ENCODE measurements at regions of chr6 and their contacts with region 1.

Region 1: DNA sequence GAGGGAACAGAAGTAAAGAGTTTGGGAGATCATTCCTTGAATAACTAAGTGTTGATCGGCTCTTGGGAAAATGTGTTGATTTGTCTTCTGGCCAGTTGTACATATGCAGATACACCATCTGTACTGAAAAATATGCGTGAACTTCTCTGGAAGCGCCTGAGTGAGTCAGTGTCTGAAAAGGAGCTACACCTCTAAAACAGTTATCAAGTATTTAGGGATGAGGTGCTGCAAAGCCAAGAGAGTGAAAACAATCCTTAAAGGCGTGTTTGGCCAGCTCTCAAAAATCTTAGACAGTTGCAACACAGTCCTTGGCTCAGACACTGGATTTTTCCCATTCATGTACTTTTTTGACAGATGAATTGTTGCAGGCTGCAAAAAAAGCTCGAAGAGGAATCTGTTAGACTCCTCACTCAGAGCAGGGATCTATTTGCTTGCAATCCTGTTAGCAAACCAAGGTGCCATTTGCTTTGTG is 61.3 kb downstream of the BMP6 start:
- DNase-seq: peak; percentile 14
- H3K4me3 ChIP-seq: no peak overlapping the region
- H3K27ac ChIP-seq: peak overlapping the region; percentile 61 to 73 (median 64)
- H3K4me1 ChIP-seq: peaks cover 0 to 15% (median 0%) of the 10 kb centered on the region in 4 donors
- H3K27me3 ChIP-seq: no peaks in the 10 kb centered on the region
- CTCF ChIP-seq: no peak
- EP300 ChIP-seq: no peak
- POLR2A ChIP-seq: no peak

Region 2: DNA sequence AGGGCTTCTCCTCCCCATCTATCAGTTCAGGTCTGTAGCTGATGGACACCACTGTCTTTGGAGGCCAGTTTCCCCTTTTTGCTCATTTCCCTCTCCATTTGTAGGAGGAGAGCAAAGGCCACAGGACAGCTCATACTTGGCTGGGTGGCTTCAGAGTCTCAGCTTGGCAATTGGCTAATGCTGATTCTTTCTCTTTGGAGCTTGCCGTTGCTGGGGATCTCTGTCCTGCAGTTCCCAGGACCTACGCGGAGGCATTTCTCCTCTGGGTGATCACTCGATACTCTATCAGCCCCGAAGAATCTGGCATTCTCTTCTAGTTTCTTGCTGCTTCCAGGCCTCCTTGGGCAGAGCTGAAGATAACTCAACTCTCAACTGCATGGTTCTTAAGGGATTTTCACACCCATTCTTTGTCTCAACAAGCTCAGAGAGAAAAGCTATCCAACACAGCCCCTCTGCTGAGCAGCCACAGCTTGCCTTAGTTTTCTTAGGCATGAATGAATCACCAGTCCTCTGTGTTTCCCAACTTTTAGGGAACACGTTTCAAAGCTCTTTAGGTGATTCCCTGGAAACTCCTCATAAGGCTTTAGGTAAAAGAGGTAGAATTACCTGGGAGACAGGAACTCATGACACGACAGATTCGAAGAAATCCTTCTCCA is 455.0 kb before region 1 on chr6:
- in situ Hi-C with region 1: no loop called
- intact Hi-C with region 1: no loop called
- DNase-seq: no peak
- H3K4me3 ChIP-seq: no peak overlapping the region
- H3K27ac ChIP-seq: no peak overlapping the region
- H3K4me1 ChIP-seq: no peaks in the 10 kb centered on the region
- H3K27me3 ChIP-seq: no peaks in the 10 kb centered on the region
- CTCF ChIP-seq: no peak
- EP300 ChIP-seq: no peak
- POLR2A ChIP-seq: no peak

Region 3: DNA sequence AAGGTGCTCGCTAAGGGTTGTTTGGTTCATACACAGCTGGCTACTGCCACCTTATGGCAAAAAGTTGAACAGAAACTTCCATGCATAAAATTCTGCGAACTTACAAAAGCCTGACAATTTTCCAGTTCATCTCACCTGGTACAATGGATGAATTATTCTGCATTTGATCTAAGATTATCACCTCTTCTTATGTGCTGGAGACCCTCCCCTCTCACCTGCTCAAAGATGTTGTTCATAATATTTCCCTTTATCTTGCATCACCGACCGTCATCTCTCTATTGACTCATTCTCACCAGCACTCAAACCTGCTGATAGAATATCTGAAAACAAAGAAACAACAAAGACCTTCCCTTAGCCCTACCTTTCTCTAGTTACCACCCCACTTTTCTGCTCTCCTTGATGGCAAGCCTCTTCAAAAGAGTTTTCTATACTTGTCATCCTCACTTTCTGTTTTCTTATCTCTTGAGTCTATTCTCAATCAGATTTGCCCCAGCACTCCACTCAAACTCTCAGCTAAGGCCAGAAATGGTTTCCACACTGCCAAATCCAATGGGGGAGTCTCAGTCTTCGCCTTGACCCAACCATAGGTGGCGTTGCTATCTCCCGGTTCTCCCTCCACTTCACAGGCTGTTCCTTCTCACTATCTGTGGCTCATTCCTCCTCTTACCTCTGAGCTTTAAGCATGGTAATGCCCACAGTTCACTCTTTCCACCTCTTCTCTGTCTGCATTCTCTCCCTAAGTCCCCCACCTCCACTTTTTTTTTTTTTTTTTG is 171.4 kb before region 1 on chr6:
- in situ Hi-C with region 1: no loop called
- intact Hi-C with region 1: no loop called
- DNase-seq: peak; percentile 33
- H3K4me3 ChIP-seq: peak overlapping the region in 1 of 4 donors; percentile 14
- H3K27ac ChIP-seq: no peak overlapping the region
- H3K4me1 ChIP-seq: peaks cover 0 to 13% (median 4%) of the 10 kb centered on the region in 4 donors
- H3K27me3 ChIP-seq: no peaks in the 10 kb centered on the region
- CTCF ChIP-seq: peak; percentile 65 to 82 (median 67)
- EP300 ChIP-seq: no peak
- POLR2A ChIP-seq: no peak

Region 4: DNA sequence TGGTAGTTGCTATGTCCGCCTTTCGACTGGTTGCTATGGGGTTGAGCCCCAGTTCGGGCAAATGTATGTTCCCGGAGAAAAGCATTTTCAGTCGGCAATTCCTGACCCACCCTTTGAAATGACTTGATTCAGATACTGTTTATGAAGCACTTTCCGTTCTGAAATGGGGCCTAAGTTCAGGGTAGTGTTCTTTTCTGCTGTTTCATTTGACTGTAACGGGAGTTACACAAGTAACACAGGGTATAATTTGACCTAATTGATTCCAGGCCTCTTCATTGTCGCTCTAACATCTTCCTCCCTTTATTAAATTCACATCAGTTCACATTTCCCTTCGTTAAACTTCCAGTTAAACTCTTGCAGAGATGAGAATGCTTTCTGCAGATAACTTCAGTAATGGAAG is 24.3 kb after region 1 on chr6:
- in situ Hi-C with region 1: no loop called
- intact Hi-C with region 1: loop called (anchors 1 kb)
- DNase-seq: no peak
- H3K4me3 ChIP-seq: no peak overlapping the region
- H3K27ac ChIP-seq: no peak overlapping the region
- H3K4me1 ChIP-seq: no peaks in the 10 kb centered on the region
- H3K27me3 ChIP-seq: no peaks in the 10 kb centered on the region
- CTCF ChIP-seq: no peak
- EP300 ChIP-seq: no peak
- POLR2A ChIP-seq: no peak